ENCODE measurements at regions of chr5 and their contacts with region 1.

Region 1: DNA sequence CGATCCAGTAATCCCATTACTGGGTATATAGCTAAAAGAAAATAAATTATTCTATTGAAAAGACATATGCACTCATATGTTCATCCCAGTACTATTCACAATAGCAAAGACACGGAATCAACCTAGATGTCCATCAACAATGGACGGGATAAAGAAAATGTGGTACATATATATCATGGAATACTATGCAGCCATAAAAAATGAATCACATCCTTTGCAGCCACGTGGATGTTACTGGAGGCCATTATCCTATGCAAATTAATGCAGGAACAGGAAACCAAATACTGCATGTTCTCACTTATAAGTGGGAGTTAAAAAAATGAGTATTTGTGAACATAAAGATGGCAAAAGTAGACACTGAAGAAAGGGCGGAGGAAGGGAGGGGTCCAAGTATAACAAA is 16.6 kb upstream of the IRGM start:
- DNase-seq: no peak
- H3K4me3 ChIP-seq: no peak overlapping the region
- H3K27ac ChIP-seq: no peak overlapping the region
- H3K4me1 ChIP-seq: no peaks in the 10 kb centered on the region
- CTCF ChIP-seq: no peak

Region 2: GRCh38 chr5:150904479-150905318 is 75.0 kb after region 1 on chr5 and contains the start of gene ZNF300:
- CTCF ChIA-PET with region 1: no interaction called
- POLR2A ChIA-PET with region 1: no interaction called
- intact Hi-C with region 1: loop called (anchors 2 kb)
- DNase-seq: no peak
- H3K4me3 ChIP-seq: no peak within 1 kb of the TSS
- H3K27ac ChIP-seq: no peak within 1 kb of the TSS
- H3K4me1 ChIP-seq: no peaks in the 10 kb centered on the region
- CTCF ChIP-seq: no peak
- total RNA-seq, gene ZNF300: not detected in 2 replicates

Measured in OCI-LY7 (cell line).